Colonic mucosa (tissue), 4 donors: ENCODE measurements at regions of chr9 and their contacts with region 1.

Region 1: GRCh38 chr9:72271613-72272478 is 93.2 kb downstream of the ZFAND5 start:
- DNase-seq: peak; percentile 80
- H3K4me3 ChIP-seq: no peak overlapping the region
- H3K27ac ChIP-seq: no peak overlapping the region
- H3K4me1 ChIP-seq: no peaks in the 10 kb centered on the region
- H3K27me3 ChIP-seq: no peaks in the 10 kb centered on the region
- CTCF ChIP-seq: peak; percentile 89

Region 2: DNA sequence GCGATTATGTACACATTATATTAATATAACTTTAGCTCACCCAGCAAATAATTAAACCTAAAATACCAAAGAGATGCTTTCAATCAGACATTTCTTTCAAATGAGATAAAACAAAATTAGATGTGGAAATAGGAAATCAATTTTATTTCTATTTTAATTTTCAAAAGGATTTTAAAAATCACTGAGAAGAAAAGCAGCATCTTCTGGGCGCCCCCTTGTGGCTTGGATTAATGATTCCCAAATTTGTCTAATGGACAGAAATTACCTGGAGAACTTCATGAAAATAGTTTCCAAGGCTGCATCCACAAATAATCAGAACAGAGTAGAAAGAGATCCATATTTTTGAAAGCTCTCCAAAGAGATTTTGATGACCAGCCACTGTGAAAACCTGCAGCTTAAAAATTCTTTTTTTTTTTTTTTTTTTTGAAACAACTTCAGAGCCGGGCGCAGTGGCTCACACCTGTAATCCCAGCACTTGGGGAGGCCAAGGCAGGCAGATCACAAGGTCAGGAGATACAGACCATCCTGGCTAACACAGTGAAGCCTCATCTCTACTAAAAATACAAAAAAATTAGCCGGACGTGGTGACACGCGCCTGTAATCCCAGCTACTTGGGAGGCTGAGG is 452.6 kb before region 1 on chr9:
- intact Hi-C with region 1: loop called (anchors 10 kb)
- DNase-seq: peak; percentile 53
- H3K4me3 ChIP-seq: no peak overlapping the region
- H3K27ac ChIP-seq: no peak overlapping the region
- H3K4me1 ChIP-seq: no peaks in the 10 kb centered on the region
- H3K27me3 ChIP-seq: no peaks in the 10 kb centered on the region
- CTCF ChIP-seq: peak; percentile 72

Region 3: DNA sequence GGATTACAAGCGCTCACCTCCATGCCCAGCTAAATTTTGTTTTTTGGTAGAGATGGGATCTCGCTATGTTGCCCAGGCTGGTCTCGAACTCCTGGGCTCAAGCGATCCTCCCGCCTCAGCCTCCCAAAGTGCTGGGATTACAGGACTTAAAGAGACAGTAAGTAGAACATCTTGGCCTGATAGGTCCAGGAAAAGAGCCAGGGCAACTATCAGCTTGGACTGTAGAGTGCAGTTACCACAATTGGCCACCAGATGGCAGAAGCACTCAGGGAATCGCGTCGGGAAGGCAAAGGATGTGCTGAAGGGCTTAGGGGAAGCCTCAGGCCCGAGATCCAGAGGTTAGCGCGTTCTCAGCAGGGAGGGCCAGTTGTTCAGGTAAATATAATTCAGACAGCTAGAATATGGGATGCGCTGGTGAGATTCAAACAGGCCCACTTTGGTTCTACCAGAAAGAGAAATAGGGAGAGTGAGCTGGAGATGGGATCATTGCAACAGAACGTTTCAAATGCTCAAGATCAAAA is 232.9 kb before region 1 on chr9:
- intact Hi-C with region 1: loop called (anchors 2 kb)
- DNase-seq: peak; percentile 89
- H3K4me3 ChIP-seq: no peak overlapping the region
- H3K27ac ChIP-seq: no peak overlapping the region
- H3K4me1 ChIP-seq: no peaks in the 10 kb centered on the region
- H3K27me3 ChIP-seq: no peaks in the 10 kb centered on the region
- CTCF ChIP-seq: peak; percentile 95

Region 4: DNA sequence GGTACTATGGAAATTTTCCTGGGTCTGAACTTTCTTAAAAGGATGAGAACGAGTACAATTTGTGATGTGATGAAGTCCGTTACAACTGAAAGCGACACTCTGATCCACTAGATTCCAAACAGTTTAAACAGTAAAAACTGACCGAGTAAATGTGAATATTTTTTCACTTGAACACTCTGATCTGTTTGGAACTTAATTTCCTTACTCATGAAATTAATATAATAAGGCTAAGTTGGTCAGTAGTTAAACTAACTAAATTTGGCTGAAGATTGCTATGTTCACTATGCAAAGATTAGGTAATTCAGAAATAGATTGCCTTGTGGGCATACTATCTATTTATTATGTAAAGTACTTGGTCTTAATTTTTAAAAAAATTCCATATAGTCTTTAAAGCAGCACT is 211.3 kb before region 1 on chr9 and contains the start of gene C9orf57:
- intact Hi-C with region 1: no loop called
- DNase-seq: no peak
- H3K4me3 ChIP-seq: no peak within 1 kb of the TSS
- H3K27ac ChIP-seq: no peak within 1 kb of the TSS
- H3K4me1 ChIP-seq: no peaks in the 10 kb centered on the region
- H3K27me3 ChIP-seq: no peaks in the 10 kb centered on the region
- CTCF ChIP-seq: no peak
- total RNA-seq, gene C9orf57: not detected

Region 5: DNA sequence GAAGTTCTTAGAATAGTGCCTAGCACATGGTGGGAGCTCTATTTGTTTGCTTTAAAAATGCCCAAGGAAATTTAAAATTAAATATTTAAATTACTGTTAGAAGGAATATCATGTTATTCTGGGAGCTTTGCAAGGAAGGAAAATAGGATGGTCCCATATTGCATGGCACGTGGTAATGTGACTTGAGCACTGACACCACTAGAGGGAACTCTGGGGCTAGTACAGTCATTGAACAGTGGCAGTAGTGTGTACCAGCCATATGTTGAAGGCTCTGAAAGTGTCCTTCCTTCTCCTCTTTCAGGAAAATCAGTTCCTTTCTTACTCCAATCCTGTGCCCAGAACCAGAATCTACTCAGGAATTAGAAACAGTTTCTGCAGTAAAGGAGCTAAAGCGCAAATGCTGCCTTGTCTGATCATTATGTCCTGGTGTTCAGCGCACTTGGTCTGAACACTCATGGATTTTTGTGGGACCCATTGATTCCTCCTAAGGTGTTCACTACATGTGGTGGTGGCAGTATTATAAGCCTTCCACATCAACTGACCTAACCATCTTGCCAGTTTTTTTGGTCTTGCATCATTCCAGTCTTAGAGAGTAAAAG is 68.5 kb before region 1 on chr9:
- intact Hi-C with region 1: loop called (anchors 5 kb)
- DNase-seq: peak; percentile 69
- H3K4me3 ChIP-seq: no peak overlapping the region
- H3K27ac ChIP-seq: no peak overlapping the region
- H3K4me1 ChIP-seq: no peaks in the 10 kb centered on the region
- H3K27me3 ChIP-seq: no peaks in the 10 kb centered on the region
- CTCF ChIP-seq: peak; percentile 56

Region 6: DNA sequence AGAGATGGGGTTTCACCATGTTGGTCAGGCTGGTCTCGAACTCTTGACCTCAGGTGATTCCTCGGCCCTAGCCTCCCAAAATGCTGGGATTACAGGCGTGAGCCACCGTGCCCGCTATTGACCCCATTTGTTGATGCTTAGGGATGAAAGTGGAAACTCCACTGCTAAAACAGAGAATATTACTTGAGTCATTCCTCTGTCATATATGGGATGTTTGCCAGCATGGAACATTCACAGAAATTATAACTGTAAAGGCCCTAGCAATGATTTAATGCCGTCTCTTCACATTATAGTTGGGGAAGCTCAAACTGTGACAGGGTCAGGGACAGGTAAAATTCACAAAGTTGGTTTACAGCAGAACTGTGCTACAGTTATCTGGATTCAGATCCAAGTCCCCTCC is 344.1 kb after region 1 on chr9:
- intact Hi-C with region 1: no loop called
- DNase-seq: no peak
- H3K4me3 ChIP-seq: no peak overlapping the region
- H3K27ac ChIP-seq: no peak overlapping the region
- H3K4me1 ChIP-seq: no peaks in the 10 kb centered on the region
- H3K27me3 ChIP-seq: no peaks in the 10 kb centered on the region
- CTCF ChIP-seq: no peak